Dorsolateral prefrontal cortex (tissue), 120 donors: ENCODE measurements at regions of chr1 and their contacts with region 1.

Region 1: DNA sequence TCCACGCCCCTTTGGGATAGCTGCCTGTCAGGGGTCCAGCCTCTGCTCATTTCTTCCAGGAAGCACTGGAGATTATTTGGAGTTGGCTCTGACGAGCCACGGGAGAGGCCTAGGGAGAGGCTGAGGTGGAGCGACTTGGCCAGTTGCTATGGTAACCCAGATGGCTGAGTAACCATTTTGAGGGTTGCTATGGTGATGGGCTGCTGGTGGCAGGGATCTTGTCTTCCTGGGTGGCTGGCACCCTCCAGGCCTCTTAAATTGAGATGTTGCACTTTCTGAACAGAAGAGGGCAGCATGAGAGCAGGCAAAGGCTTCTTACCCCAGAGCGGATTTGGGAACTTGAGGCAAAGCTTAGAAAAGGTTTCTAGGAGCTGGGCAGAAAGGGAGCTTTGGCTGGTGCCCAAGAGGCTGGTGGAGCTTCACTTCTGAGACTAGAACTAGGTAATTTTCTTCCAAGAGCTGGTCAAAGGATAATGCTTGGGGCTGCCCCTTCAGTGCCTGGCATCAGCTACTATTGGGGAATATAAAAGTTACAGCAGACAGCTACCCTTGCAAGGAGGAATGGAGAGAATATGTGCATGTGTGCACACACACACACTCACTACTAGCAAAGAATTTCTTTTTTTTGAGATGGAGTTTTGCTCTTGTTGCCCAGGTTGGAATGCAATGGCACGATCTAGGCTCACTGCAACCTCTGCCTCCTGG is 72.5 kb downstream of the NDUFS5 start:
- DNase-seq: peak; percentile 38 to 85 (median 80)
- H3K4me3 ChIP-seq: peak overlapping the region in 7 of 59 donors; percentile 1 to 28 (median 5)
- H3K27ac ChIP-seq: peak overlapping the region in 46 of 59 donors; percentile 7 to 80 (median 62)
- H3K27me3 ChIP-seq: no peaks in the 10 kb centered on the region
- CTCF ChIP-seq: peak; percentile 40 to 86 (median 78)

Region 2: GRCh38 chr1:38919130-38919529 is 179.6 kb before region 1 on chr1:
- intact Hi-C with region 1: loop called (anchors 5 kb)
- DNase-seq: peak in 9 of 10 donors; percentile 36 to 70 (median 63)
- H3K4me3 ChIP-seq: peak overlapping the region in 22 of 59 donors; percentile 0 to 43 (median 22)
- H3K27ac ChIP-seq: peak overlapping the region in 57 of 59 donors; percentile 23 to 89 (median 78)
- H3K27me3 ChIP-seq: no peaks in the 10 kb centered on the region
- CTCF ChIP-seq: peak in 52 of 56 donors; percentile 21 to 75 (median 47)

Region 3: GRCh38 chr1:39189592-39190041 is 90.9 kb after region 1 on chr1:
- intact Hi-C with region 1: loop called in 1 of 2 experiments (anchors 2 kb)
- DNase-seq: no peak
- H3K4me3 ChIP-seq: no peak overlapping the region
- H3K27ac ChIP-seq: peak overlapping the region in 20 of 59 donors; percentile 4 to 95 (median 37)
- H3K27me3 ChIP-seq: no peaks in the 10 kb centered on the region
- CTCF ChIP-seq: no peak

Region 4: GRCh38 chr1:39268112-39268581 is 169.4 kb after region 1 on chr1:
- intact Hi-C with region 1: loop called in 1 of 2 experiments (anchors 5 kb)
- DNase-seq: peak in 8 of 10 donors; percentile 38 to 82 (median 61)
- H3K4me3 ChIP-seq: peak overlapping the region; percentile 32 to 74 (median 58)
- H3K27ac ChIP-seq: peak overlapping the region; percentile 53 to 97 (median 92)
- H3K27me3 ChIP-seq: no peaks in the 10 kb centered on the region
- CTCF ChIP-seq: peak in 2 of 56 donors; percentile 12 to 32

Region 5: GRCh38 chr1:39408641-39409054 is 309.9 kb after region 1 on chr1:
- intact Hi-C with region 1: loop called in 1 of 2 experiments (anchors 2 kb)
- DNase-seq: peak; percentile 85 to 94 (median 90)
- H3K4me3 ChIP-seq: peak overlapping the region; percentile 50 to 93 (median 79)
- H3K27ac ChIP-seq: peak overlapping the region; percentile 73 to 98 (median 93)
- H3K27me3 ChIP-seq: no peaks in the 10 kb centered on the region
- CTCF ChIP-seq: peak in 24 of 56 donors; percentile 6 to 48 (median 22)

Region 6: DNA sequence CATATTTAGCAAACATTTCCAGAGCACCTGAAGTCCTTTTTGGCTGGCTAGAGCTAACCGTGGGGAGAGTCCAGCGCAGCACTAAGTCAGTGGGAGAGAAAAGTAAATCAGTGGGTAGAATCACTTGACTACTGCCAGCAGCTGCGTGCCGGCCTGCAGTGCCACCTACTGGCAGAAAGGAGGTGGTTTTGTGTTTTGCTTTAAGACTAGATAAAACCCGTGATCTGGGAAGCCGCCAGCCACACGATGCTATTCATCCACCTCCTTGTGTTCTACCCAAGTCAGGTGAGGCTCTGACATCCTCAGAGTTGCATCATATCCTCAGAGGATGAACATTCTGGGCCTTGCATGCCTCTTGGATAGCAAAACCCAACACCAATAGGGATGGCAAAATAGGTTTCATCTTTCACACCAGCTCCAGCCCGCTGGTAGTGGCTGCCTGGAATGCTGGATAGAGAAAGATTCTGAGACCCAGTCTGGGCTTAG is 554.9 kb after region 1 on chr1:
- intact Hi-C with region 1: loop called in 1 of 2 experiments (anchors 10 kb)
- DNase-seq: peak; percentile 71 to 94 (median 84)
- H3K4me3 ChIP-seq: peak overlapping the region in 36 of 59 donors; percentile 1 to 52 (median 26)
- H3K27ac ChIP-seq: peak overlapping the region in 44 of 59 donors; percentile 1 to 87 (median 56)
- H3K27me3 ChIP-seq: no peaks in the 10 kb centered on the region
- CTCF ChIP-seq: peak; percentile 86 to 99 (median 95)